ENCODE measurements at regions of chr4 and their contacts with region 1.

Region 1: DNA sequence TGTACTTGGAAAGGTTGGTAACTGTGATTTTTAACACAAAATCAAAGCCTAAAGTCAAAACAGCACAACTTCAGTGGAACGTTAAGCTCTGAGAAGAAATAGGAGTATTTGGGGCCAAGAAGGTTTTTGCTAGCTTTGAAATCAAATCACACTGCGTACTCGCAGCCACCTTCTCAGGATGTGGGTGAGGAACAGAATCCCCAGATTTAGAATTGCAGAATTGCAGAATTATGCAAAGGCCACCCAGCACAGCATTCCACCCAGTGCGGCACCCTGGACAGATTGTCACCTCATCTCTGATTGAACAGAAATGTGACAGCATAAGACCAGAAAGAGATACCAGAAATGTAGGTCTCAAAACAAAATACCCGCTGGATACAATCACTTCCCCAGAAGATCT is 181.1 kb downstream of the DHX15 start:
- DNase-seq: no peak
- ATAC-seq: no peak
- H3K4me3 ChIP-seq: no peak overlapping the region
- H3K27ac ChIP-seq: no peak overlapping the region
- H3K4me1 ChIP-seq: no peaks in the 10 kb centered on the region
- H3K27me3 ChIP-seq: no peaks in the 10 kb centered on the region
- CTCF ChIP-seq: no peak

Region 2: DNA sequence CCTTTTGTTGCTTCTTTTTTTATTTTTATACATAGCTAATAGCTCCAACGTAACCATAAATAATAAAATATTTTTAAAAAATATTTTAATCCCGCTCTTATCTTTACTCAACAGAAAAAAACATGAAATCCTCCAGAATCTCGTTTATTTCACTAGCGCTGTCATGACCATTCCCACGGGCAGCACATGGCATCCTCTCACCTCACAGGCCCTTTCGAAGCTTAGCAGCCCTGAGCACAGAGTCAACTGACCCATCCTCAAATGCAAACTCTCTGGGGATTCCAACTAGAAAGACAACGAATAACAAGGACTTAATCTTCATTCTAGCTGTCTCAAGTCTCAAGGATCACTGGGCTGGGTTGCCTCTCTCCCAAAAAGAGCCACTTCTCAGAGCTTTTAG is 227.6 kb before region 1 on chr4:
- CTCF ChIA-PET with region 1: interaction called, 10 read pairs
- POLR2A ChIA-PET with region 1: no interaction called
- in situ Hi-C with region 1: no loop called
- intact Hi-C with region 1: no loop called
- DNase-seq: no peak
- ATAC-seq: no peak
- H3K4me3 ChIP-seq: no peak overlapping the region
- H3K27ac ChIP-seq: no peak overlapping the region
- H3K4me1 ChIP-seq: no peaks in the 10 kb centered on the region
- H3K27me3 ChIP-seq: no peaks in the 10 kb centered on the region
- CTCF ChIP-seq: no peak

Measured in Panc1 (cell line).